ENCODE measurements at regions of chr18 and their contacts with region 1.

Region 1: GRCh38 chr18:13330996-13331395 is 112.4 kb downstream of the LDLRAD4 start:
- DNase-seq: no peak
- H3K4me3 ChIP-seq: no peak overlapping the region
- H3K27ac ChIP-seq: no peak overlapping the region
- H3K4me1 ChIP-seq: no peaks in the 10 kb centered on the region
- H3K27me3 ChIP-seq: peaks cover 0 to 5% of the 10 kb centered on the region in 2 experiments
- CTCF ChIP-seq: no peak
- POLR2A ChIP-seq: no peak

Region 2: DNA sequence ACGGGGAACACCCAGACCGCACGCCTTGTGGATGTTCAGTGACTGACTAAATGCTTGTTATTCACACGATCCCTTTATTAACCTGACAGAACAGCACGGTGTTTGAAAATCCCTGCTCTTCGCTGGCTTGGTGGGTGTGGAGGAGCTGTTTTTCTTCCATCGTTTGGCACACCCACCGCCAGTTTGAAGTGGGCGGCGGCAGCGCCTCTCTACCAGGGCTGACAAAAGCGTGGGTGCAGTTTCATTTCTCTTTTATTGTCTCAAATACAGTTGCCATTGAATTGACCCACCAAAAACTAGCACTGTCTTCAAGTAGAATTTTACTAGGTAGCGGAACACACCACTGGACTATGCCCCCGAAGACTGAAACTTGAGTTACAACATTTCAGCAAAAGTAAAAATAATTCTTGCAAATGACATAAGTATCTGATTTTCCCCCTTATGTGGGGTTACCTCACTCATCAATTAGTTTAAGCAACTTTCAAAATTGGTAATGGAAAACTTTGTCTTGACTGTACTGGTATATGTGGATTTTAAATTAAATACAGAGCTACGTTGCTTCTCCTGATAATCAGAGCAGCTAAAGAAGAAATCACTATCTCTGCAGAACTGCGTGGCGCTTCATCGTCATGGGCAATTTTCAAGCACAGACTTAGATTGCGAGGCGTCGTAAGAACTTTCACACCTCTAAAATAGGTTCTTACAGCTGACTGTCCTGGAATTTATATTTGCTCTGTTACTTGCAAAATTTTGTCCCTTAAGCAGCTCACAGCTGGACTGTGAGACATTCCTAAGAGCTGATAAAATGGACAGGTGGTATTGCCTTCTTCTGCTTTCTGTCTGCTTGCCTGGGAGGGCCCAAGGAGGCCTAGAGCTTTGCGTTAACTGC is 51.6 kb before region 1 on chr18:
- CTCF ChIA-PET with region 1: no interaction called
- POLR2A ChIA-PET with region 1: no interaction called
- dilution Hi-C with region 1: no loop called
- intact Hi-C with region 1: loop called (anchors 5 kb)
- DNase-seq: no peak
- H3K4me3 ChIP-seq: no peak overlapping the region
- H3K27ac ChIP-seq: no peak overlapping the region
- H3K4me1 ChIP-seq: no peaks in the 10 kb centered on the region
- H3K27me3 ChIP-seq: peaks cover 5 to 7% of the 10 kb centered on the region in 2 experiments
- CTCF ChIP-seq: no peak
- POLR2A ChIP-seq: no peak

Region 3: DNA sequence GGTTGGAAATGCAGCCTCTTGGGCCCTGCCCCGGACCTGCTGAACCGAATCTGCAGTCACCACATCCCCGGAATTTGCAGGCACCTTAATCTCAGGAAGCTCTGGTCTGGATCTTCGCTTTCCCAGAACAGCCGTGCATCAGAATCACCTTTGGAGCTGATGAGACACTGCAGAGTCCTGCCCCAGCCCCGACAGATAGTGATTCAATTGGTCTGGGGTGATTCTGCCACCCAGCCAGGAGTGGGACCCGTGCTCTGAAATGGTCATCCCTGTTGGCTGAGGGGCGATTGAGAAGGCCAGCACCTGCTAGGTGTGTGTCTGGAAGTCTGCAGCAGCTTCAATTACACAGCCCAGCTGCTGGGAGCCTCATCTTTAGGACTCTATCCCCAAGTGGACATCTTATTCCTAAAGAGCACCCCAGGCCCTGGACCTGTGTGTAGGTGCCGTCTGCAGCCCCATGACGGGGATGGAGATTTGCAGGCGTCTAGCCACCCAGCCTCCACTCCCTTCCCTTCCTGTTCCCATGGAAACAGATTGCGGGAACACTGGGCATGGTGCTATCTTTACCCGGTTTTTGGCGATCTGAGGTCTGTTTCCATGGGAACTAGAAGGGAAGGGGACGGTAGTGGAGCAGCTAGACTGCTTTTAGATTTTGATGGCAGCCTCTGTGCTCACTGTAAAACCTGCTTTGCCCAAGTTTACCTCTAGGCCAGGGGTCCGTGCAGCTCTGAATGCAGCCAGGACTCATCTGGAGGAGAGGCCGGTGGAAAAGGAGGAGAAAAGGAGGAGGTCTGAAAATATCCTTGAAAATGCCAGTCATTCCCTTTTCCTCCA is 43.7 kb after region 1 on chr18:
- CTCF ChIA-PET with region 1: no interaction called
- POLR2A ChIA-PET with region 1: no interaction called
- dilution Hi-C with region 1: no loop called
- intact Hi-C with region 1: no loop called
- DNase-seq: no peak
- H3K4me3 ChIP-seq: peak overlapping the region in 1 of 3 experiments; percentile 20
- H3K27ac ChIP-seq: peak overlapping the region; percentile 90
- H3K4me1 ChIP-seq: peaks cover 16% of the 10 kb centered on the region
- H3K27me3 ChIP-seq: no peaks in the 10 kb centered on the region
- CTCF ChIP-seq: no peak
- POLR2A ChIP-seq: no peak

Measured in endothelial cell of umbilical vein (primary cell).